GM12878 (cell line): ENCODE measurements at regions of chr5 and their contacts with region 1.

Region 1: GRCh38 chr5:10418654-10419345 is 22.9 kb upstream of the ROPN1L start:
- DNase-seq: no peak
- ATAC-seq: peak; percentile 65
- H3K4me3 ChIP-seq: no peak overlapping the region
- H3K27ac ChIP-seq: peak overlapping the region; percentile 35
- H3K4me1 ChIP-seq: 0 out of 2 replicates have a peak, but pooled peaks cover 3% of the 10 kb centered on the region
- H3K27me3 ChIP-seq: no peaks in the 10 kb centered on the region
- CTCF ChIP-seq: no peak
- EP300 ChIP-seq: no peak
- POLR2A ChIP-seq: no peak
- RAD21 ChIP-seq: no peak

Region 2: GRCh38 chr5:10275991-10276390 is 142.8 kb before region 1 on chr5:
- CTCF ChIA-PET with region 1: no interaction called
- POLR2A ChIA-PET with region 1: no interaction called
- RAD21 ChIA-PET with region 1: no interaction called
- SMC1A ChIA-PET with region 1: interaction called, 4 read pairs
- in situ Hi-C with region 1: loop called (anchors 5 kb)
- intact Hi-C with region 1: no loop called
- DNase-seq: no peak
- ATAC-seq: no peak
- H3K4me3 ChIP-seq: no peak overlapping the region
- H3K27ac ChIP-seq: no peak overlapping the region
- H3K4me1 ChIP-seq: no peaks in the 10 kb centered on the region
- H3K27me3 ChIP-seq: no peaks in the 10 kb centered on the region; a peak in 1 of 4 replicates
- CTCF ChIP-seq: no peak
- EP300 ChIP-seq: no peak
- POLR2A ChIP-seq: no peak
- RAD21 ChIP-seq: no peak

Region 3: DNA sequence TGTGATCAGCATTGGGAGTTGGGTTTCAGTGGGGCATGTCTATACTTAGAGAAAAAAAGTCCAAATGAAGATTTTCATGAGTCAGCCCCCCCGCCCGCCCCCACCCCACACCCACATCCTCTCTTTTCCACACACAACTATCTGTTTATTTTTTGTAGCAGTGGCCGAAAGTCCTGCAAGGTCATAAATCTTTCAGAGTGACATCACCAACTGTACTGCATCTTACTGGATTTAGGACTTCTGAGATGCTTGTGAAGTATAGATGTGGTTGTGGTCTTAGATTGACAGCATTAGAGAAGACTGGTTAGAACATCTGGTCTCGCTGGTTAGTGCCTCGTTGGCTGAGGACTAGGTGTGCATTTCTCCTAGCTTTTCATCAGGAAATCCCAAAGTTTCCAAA is 15.6 kb after region 1 on chr5:
- CTCF ChIA-PET with region 1: interaction called, 3 read pairs
- POLR2A ChIA-PET with region 1: no interaction called
- RAD21 ChIA-PET with region 1: no interaction called
- SMC1A ChIA-PET with region 1: interaction called, 4 read pairs
- in situ Hi-C with region 1: no loop called
- intact Hi-C with region 1: loop called (anchors 2 kb)
- DNase-seq: no peak
- ATAC-seq: no peak
- H3K4me3 ChIP-seq: no peak overlapping the region
- H3K27ac ChIP-seq: no peak overlapping the region
- H3K4me1 ChIP-seq: no peaks in the 10 kb centered on the region
- H3K27me3 ChIP-seq: no peaks in the 10 kb centered on the region
- CTCF ChIP-seq: no peak
- EP300 ChIP-seq: no peak
- POLR2A ChIP-seq: no peak
- RAD21 ChIP-seq: no peak

Region 4: GRCh38 chr5:10505517-10506095 is 86.8 kb after region 1 on chr5:
- CTCF ChIA-PET with region 1: no interaction called
- POLR2A ChIA-PET with region 1: no interaction called
- RAD21 ChIA-PET with region 1: no interaction called
- SMC1A ChIA-PET with region 1: no interaction called
- in situ Hi-C with region 1: no loop called
- intact Hi-C with region 1: no loop called
- DNase-seq: no peak
- ATAC-seq: peak; percentile 92
- H3K4me3 ChIP-seq: no peak overlapping the region
- H3K27ac ChIP-seq: peak overlapping the region; percentile 59; the same call in 1 of the 2 replicates
- H3K4me1 ChIP-seq: peaks cover 5% of the 10 kb centered on the region
- H3K27me3 ChIP-seq: no peaks in the 10 kb centered on the region
- CTCF ChIP-seq: no peak
- EP300 ChIP-seq: 0 out of 4 replicates have a peak, but pooled peaks have one; percentile 21 to 41
- POLR2A ChIP-seq: no peak
- RAD21 ChIP-seq: no peak